ENCODE measurements at regions of chr19 and their contacts with region 1.

Region 1: DNA sequence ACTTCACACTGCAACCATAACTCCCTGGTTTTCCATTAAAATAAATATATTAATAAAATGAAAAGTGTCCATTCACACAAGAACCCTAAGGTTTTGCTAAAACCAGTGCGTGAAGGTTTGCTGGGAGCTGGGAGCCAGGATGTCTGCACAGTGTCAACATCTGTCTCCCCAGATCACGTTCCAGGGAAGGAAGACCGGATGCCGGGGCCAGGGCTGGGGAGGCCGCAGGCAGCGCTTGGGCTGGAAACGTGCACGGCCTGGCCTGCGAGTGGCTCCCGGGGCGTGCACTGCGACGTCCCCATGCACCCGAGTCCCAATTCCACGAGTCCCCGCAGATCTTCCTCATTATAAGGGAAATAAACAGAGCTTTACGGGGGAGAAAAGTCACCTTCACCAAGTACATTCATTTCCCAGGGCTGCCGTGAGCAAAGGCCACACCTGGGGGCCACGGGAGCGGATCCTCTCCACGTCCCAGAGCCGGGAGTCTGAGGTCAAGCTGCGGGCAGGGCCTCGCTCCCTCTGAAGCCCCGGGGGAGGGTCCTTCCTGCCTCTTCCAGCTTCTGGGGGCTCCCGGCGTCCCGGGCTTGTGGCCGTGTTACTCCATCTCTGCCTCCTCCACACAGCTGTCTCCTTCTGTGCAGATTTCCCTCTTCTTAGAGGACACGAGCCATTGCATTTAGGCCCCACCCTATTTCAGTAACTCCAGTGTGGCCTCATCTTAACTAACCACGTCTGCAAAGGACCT is 12.8 kb downstream of the SHC2 start:
- DNase-seq: no peak
- H3K4me3 ChIP-seq: no peak overlapping the region
- H3K27ac ChIP-seq: no peak overlapping the region
- H3K4me1 ChIP-seq: no peaks in the 10 kb centered on the region
- H3K27me3 ChIP-seq: no peaks in the 10 kb centered on the region
- CTCF ChIP-seq: no peak
- POLR2A ChIP-seq: no peak

Region 2: GRCh38 chr19:435056-435706 is 12.8 kb before region 1 on chr19:
- intact Hi-C with region 1: no loop called
- DNase-seq: no peak
- H3K4me3 ChIP-seq: no peak overlapping the region
- H3K27ac ChIP-seq: no peak overlapping the region
- H3K4me1 ChIP-seq: no peaks in the 10 kb centered on the region
- H3K27me3 ChIP-seq: no peaks in the 10 kb centered on the region
- CTCF ChIP-seq: no peak
- POLR2A ChIP-seq: no peak

Region 3: DNA sequence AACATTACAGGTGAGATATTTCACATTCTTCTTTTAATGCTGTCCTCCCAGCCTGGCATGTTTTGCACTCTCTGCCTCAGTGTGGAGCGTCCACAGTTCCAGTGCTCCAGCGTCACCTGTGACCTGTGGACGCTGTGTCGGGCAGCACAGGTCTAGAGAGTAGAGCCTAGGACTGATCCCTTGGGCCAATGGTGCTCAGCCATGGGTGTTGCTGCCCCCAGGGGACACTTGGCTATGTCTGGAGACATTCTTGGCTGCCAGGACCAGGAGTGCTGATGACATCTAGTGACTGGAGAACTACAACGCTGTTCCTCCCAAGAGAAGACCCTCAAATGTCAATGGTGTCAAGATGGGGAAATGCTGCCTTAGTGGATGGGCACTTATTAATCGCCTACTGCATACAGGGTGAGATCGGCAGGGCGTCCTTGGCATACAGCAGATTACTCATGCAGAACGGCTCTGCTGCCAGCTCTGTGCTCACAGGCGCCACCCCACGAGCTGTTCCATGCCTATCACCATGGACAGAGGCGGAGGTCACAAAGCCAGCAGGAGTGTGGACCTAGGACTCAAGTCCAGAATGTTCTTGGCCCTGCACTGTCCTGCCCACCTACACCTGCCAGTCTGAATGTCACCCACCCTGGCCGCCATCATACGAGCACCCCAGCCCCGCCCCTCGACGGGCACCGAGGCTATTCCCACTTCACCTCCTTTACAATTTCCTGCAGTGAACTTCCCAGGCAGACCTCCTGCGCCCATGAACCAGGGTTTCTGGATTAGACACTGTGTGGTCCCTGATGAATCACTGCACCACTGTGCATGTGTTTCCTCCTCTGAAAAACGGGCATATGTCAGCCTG is 34.4 kb after region 1 on chr19:
- intact Hi-C with region 1: loop called (anchors 1 kb)
- DNase-seq: no peak
- H3K4me3 ChIP-seq: no peak overlapping the region
- H3K27ac ChIP-seq: no peak overlapping the region
- H3K4me1 ChIP-seq: no peaks in the 10 kb centered on the region
- H3K27me3 ChIP-seq: peaks cover 0 to 17% of the 10 kb centered on the region in 2 donors
- CTCF ChIP-seq: no peak
- POLR2A ChIP-seq: no peak

Region 4: GRCh38 chr19:497861-498510 is 50.0 kb after region 1 on chr19:
- intact Hi-C with region 1: no loop called
- DNase-seq: no peak
- H3K4me3 ChIP-seq: peak overlapping the region in 2 of 3 donors; percentile 27 to 58
- H3K27ac ChIP-seq: no peak overlapping the region
- H3K4me1 ChIP-seq: peaks cover 0 to 3% of the 10 kb centered on the region in 2 donors
- H3K27me3 ChIP-seq: peaks cover 12 to 35% of the 10 kb centered on the region in 2 donors
- CTCF ChIP-seq: no peak
- POLR2A ChIP-seq: no peak

Region 5: GRCh38 chr19:1205114-1206062 is 757.4 kb after region 1 on chr19 and contains the start of gene STK11:
- intact Hi-C with region 1: no loop called
- DNase-seq: peak; percentile 99
- H3K4me3 ChIP-seq: peak within 1 kb of the TSS; percentile 70 to 93 (median 75)
- H3K27ac ChIP-seq: peak within 1 kb of the TSS; percentile 89 to 90
- H3K4me1 ChIP-seq: peaks cover 6 to 7% of the 10 kb centered on the region in 2 donors
- H3K27me3 ChIP-seq: no peaks in the 10 kb centered on the region
- CTCF ChIP-seq: no peak
- POLR2A ChIP-seq: peak; percentile 51
- total RNA-seq, gene STK11: 32.8 to 55.0 (median 52.1) TPM